Motor neuron (in vitro differentiated cells): ENCODE measurements at regions of chr4 and their contacts with region 1.

Region 1: GRCh38 chr4:44629280-44629866 is 22.1 kb downstream of the YIPF7 start:
- ATAC-seq: peak; percentile 38 to 69 (median 62)
- H3K4me3 ChIP-seq: no peak overlapping the region
- H3K27ac ChIP-seq: no peak overlapping the region
- H3K4me1 ChIP-seq: no peaks in the 10 kb centered on the region

Region 2: DNA sequence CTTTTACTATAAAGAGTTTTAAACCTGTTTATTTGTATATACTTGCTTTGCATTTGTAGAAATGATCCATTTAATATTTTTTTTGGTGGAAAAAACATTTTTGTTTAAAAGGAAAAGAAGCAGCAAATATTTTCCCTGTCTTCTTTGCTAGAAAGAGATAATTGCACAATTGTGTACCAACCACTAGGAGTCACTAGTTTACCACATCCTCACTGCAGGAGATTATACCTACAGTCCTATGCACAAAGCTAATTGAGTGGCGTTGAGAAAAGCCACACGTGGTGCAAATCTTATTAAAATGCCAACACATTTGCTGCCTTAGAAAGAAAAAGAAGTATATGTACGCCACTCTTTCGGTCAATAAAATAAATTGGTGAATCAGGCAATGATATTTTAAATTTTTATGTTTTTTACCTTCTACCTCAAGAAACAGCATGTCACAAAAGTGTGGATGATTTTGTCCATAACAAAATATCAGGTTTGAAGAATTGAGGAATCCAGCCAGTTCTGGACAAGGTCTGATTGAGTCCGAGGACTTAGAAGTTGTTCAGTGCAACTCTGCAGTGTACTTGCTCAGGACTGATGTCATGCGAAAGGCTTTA is 1633.9 kb before region 1 on chr4:
- in situ Hi-C with region 1: loop called in 2 of 9 experiments (anchors 25 kb)
- ATAC-seq: peak in 7 of 8 experiments; percentile 39 to 76 (median 65)
- H3K4me3 ChIP-seq: no peak overlapping the region
- H3K27ac ChIP-seq: no peak overlapping the region
- H3K4me1 ChIP-seq: no peaks in the 10 kb centered on the region

Region 3: GRCh38 chr4:43132010-43132582 is 1497.3 kb before region 1 on chr4:
- in situ Hi-C with region 1: loop called in 4 of 9 experiments (anchors 25 kb)
- ATAC-seq: peak in 7 of 8 experiments; percentile 34 to 60 (median 41)
- H3K4me3 ChIP-seq: no peak overlapping the region
- H3K27ac ChIP-seq: no peak overlapping the region
- H3K4me1 ChIP-seq: no peaks in the 10 kb centered on the region

Region 4: DNA sequence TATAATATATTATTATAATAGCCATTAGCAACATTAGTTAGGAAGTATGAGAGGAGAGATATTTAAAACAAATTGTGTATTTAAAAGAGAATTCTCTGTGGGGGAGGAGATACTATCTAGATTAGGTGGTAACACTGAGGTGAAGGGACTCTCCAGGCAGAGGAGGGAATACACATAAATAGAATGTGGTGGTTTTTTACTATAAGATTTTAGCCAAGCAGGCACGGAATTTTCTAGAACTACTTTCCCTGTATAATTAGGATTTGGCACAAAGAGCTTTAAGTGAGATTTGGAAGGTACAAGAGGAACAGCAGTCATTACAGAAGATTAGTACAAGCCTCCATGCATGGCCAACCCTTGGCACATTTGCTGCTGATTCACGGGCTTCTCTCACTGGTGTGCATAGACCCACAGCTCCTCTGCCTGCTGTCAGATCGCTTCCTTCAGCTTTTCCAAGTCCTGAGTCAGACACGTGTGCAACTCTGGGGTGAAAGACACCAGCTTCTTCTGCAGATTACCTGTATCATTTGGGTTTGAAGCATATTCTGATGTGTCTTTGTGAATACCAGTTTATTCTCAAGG is 866.3 kb before region 1 on chr4:
- in situ Hi-C with region 1: loop called in 1 of 9 experiments (anchors 25 kb)
- ATAC-seq: peak in 1 of 8 experiments; percentile 36
- H3K4me3 ChIP-seq: no peak overlapping the region
- H3K27ac ChIP-seq: no peak overlapping the region
- H3K4me1 ChIP-seq: peaks cover 0 to 6% of the 10 kb centered on the region in 2 donors

Region 5: DNA sequence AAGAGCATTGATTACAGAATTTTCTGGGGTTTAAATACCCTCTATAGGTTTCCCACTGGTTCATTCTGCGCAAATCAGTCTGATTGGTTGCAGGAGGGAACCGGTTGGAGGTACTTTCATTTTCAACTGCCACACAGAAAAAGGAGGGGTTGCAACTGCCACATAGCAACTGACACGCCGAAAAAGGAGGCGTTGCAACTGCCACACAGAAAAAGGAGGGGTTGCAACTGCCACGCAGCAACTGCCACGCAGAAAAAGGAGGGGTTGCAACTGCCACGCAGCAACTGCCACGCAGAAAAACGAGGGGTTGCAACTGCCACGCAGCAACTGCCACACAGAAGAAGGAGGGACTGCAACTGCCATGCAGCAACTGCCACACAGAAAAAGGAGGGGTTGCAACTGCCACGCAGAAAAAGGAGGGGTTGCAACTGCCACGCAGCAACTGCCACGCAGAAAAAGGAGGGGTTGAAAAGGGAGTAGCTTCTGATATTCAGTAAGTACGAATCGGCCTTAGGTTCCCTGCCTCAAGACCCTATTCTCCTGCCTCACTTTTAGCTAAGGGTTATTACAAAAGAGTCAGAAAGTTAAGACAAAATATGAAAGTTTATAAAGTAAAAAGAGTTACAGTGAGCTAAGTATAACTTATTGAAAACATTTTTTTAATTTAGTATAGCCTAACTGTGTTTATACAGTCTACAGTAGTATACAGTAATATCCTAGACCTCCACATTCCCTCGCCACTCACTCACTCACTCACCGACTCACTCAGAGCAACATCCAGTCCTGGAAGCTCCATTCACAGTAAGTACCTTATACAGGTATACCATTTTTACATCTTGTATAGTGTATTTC is 612.6 kb before region 1 on chr4:
- in situ Hi-C with region 1: no loop called
- ATAC-seq: peak in 1 of 8 experiments; percentile 31
- H3K4me3 ChIP-seq: no peak overlapping the region
- H3K27ac ChIP-seq: no peak overlapping the region
- H3K4me1 ChIP-seq: no peaks in the 10 kb centered on the region

Region 6: GRCh38 chr4:44056721-44057151 is 572.6 kb before region 1 on chr4:
- in situ Hi-C with region 1: no loop called
- ATAC-seq: peak in 5 of 8 experiments; percentile 64 to 95 (median 91)
- H3K4me3 ChIP-seq: no peak overlapping the region
- H3K27ac ChIP-seq: peak overlapping the region; percentile 39 to 68
- H3K4me1 ChIP-seq: peaks cover 4 to 15% of the 10 kb centered on the region in 2 donors

Region 7: GRCh38 chr4:44448548-44449461 is 180.6 kb before region 1 on chr4 and contains the start of gene KCTD8:
- in situ Hi-C with region 1: no loop called
- ATAC-seq: peak; percentile 85 to 95 (median 90)
- H3K4me3 ChIP-seq: peak within 1 kb of the TSS; percentile 39 to 53 (median 45)
- H3K27ac ChIP-seq: peak within 1 kb of the TSS; percentile 2 to 30
- H3K4me1 ChIP-seq: peaks cover 2 to 10% of the 10 kb centered on the region in 2 donors
- total RNA-seq, gene KCTD8: 1.2 to 2.7 (median 2.4) TPM in 5 of 8 experiments, not detected in the others